Activated CD8-positive, alpha-beta T cell treated with anti-CD3 and anti-CD28 coated beads for 36 hours (primary cell): ENCODE measurements at regions of chr13 and their contacts with region 1.

Region 1: DNA sequence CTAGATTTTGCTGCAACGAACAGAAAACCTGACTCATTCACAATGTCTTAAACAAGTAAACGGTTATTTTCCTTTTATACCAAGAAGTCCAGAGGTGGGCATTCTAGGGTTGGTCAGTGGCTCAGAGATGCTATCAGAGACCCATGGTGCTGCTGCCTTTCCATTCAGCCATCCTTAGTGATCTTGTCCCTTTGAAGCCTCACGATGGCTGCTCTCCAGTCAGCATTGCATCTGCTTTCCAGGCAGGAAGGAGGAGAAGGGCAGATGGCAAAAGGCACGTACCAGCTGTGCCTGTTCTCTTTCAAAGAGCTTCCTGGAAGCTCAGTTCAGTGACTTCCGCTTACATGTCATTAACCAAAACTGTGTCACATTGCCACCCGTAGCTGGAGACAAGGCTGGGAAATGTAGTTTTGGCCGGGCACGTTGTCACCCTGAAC is 30.1 kb downstream of the WDFY2 start:
- DNase-seq: peak; percentile 77
- ATAC-seq: peak; percentile 93
- H3K4me3 Mint-ChIP-seq: peak overlapping the region; percentile 79
- H3K27ac Mint-ChIP-seq: peak overlapping the region; percentile 98
- H3K4me1 Mint-ChIP-seq: peaks cover 23% of the 10 kb centered on the region
- H3K27me3 Mint-ChIP-seq: no peaks in the 10 kb centered on the region
- CTCF ChIP-seq: no peak

Region 2: GRCh38 chr13:51729866-51730546 is 115.6 kb after region 1 on chr13:
- CTCF ChIA-PET with region 1: no interaction called
- POLR2A ChIA-PET with region 1: no interaction called
- intact Hi-C with region 1: loop called (anchors 10 kb)
- DNase-seq: peak; percentile 77
- ATAC-seq: peak; percentile 83
- H3K4me3 Mint-ChIP-seq: no peak overlapping the region
- H3K27ac Mint-ChIP-seq: no peak overlapping the region
- H3K4me1 Mint-ChIP-seq: peaks cover 2% of the 10 kb centered on the region
- H3K27me3 Mint-ChIP-seq: no peaks in the 10 kb centered on the region
- CTCF ChIP-seq: no peak